MCF 10A (cell line): ENCODE measurements at regions of chr14 and their contacts with region 1.

Region 1: GRCh38 chr14:30443368-30444007 is 115.5 kb upstream of the G2E3 start:
- DNase-seq: peak; percentile 56
- H3K4me3 Mint-ChIP-seq: no peak overlapping the region
- H3K27ac Mint-ChIP-seq: no peak overlapping the region
- H3K4me1 Mint-ChIP-seq: no peaks in the 10 kb centered on the region
- H3K27me3 Mint-ChIP-seq: peaks cover 24% of the 10 kb centered on the region
- CTCF ChIP-seq: peak; percentile 57

Region 2: GRCh38 chr14:28756884-28757570 is 1686.5 kb before region 1 on chr14:
- CTCF ChIA-PET with region 1: interaction called, 10 read pairs
- POLR2A ChIA-PET with region 1: no interaction called
- intact Hi-C with region 1: loop called (anchors 10 kb)
- DNase-seq: peak; percentile 60
- H3K4me3 Mint-ChIP-seq: peak overlapping the region; percentile 48
- H3K27ac Mint-ChIP-seq: no peak overlapping the region
- H3K4me1 Mint-ChIP-seq: peaks cover 23% of the 10 kb centered on the region
- H3K27me3 Mint-ChIP-seq: peaks cover 81% of the 10 kb centered on the region
- CTCF ChIP-seq: peak; percentile 73

Region 3: GRCh38 chr14:30005114-30005808 is 438.2 kb before region 1 on chr14:
- CTCF ChIA-PET with region 1: interaction called, 3 read pairs
- POLR2A ChIA-PET with region 1: no interaction called
- intact Hi-C with region 1: loop called (anchors 5 kb)
- DNase-seq: peak; percentile 68
- H3K4me3 Mint-ChIP-seq: no peak overlapping the region
- H3K27ac Mint-ChIP-seq: no peak overlapping the region
- H3K4me1 Mint-ChIP-seq: peaks cover 7% of the 10 kb centered on the region
- H3K27me3 Mint-ChIP-seq: no peaks in the 10 kb centered on the region
- CTCF ChIP-seq: peak; percentile 78

Region 4: GRCh38 chr14:30462358-30462757 is 18.9 kb after region 1 on chr14:
- CTCF ChIA-PET with region 1: no interaction called
- POLR2A ChIA-PET with region 1: no interaction called
- intact Hi-C with region 1: loop called (anchors 1 kb)
- DNase-seq: no peak
- H3K4me3 Mint-ChIP-seq: no peak overlapping the region
- H3K27ac Mint-ChIP-seq: no peak overlapping the region
- H3K4me1 Mint-ChIP-seq: no peaks in the 10 kb centered on the region
- H3K27me3 Mint-ChIP-seq: peaks cover 45% of the 10 kb centered on the region
- CTCF ChIP-seq: no peak